Activated CD4-positive, alpha-beta T cell treated with anti-CD3 and anti-CD28 coated beads, Interleukin-2, amount 10 ng/mL, durations not matched to agents 7 days and 5 days (primary cell): ENCODE measurements at regions of chr20 and their contacts with region 1.

Region 1: DNA sequence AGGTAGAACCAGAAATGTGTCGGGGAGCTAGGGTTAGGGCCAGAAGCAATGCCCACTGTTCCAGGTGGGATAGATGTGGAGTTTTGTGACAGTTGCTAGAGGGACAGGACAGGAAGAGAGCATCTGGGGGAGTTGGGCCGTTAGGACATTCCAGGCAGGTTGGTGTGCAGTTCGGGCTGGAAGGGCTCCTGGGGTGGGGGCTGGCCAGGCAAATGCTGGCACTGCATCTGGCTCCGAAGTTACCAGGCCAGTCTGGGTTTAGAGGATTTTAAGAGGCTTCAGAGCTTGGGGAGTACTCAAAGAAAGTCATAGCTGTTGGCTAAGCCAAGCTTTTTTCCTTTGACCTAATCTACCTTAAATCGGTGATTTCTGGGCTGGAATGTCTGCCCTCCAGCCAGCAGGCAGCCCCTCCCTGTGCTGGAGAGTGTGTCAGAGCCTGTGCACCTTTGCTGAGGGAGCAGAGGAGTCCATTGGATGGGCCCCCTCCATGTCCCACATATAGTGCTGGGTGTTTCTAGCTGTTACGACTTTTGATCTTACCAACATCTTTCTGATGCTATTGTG is 20.8 kb downstream of the PLCG1 start:
- DNase-seq: no peak
- H3K4me3 Mint-ChIP-seq: peak overlapping the region; percentile 75
- H3K27ac Mint-ChIP-seq: peak overlapping the region; percentile 97
- H3K4me1 Mint-ChIP-seq: peaks cover 87% of the 10 kb centered on the region
- H3K27me3 Mint-ChIP-seq: no peaks in the 10 kb centered on the region

Region 2: GRCh38 chr20:41173161-41173721 is 15.1 kb after region 1 on chr20:
- CTCF ChIA-PET with region 1: interaction called, 13 read pairs
- POLR2A ChIA-PET with region 1: no interaction called
- DNase-seq: peak; percentile 62
- H3K4me3 Mint-ChIP-seq: no peak overlapping the region
- H3K27ac Mint-ChIP-seq: no peak overlapping the region
- H3K4me1 Mint-ChIP-seq: peaks cover 26% of the 10 kb centered on the region
- H3K27me3 Mint-ChIP-seq: no peaks in the 10 kb centered on the region

Region 3: DNA sequence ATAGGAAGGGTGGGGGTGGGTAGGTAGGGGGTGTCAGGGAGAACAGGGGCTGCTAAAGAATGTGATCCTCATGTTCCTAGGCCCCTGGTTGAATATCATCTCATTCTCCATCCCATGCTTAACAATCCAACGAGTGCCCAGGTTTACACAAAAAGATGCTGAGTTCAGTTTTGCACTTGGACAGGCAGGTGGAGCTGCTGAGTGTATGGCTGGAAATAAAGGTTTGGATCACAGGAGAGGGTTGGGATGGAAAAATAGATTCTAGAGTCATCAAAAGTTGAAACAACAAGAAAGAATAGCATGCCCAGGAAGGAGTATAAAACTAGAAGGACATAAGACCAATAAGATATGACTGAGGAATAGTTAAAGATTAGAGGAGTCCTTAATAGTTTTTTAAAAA is 445.8 kb after region 1 on chr20:
- CTCF ChIA-PET with region 1: no interaction called
- POLR2A ChIA-PET with region 1: no interaction called
- DNase-seq: no peak
- H3K4me3 Mint-ChIP-seq: no peak overlapping the region
- H3K27ac Mint-ChIP-seq: no peak overlapping the region
- H3K4me1 Mint-ChIP-seq: peaks cover 11% of the 10 kb centered on the region
- H3K27me3 Mint-ChIP-seq: no peaks in the 10 kb centered on the region